ENCODE measurements at regions of chr22 and their contacts with region 1.

Region 1: DNA sequence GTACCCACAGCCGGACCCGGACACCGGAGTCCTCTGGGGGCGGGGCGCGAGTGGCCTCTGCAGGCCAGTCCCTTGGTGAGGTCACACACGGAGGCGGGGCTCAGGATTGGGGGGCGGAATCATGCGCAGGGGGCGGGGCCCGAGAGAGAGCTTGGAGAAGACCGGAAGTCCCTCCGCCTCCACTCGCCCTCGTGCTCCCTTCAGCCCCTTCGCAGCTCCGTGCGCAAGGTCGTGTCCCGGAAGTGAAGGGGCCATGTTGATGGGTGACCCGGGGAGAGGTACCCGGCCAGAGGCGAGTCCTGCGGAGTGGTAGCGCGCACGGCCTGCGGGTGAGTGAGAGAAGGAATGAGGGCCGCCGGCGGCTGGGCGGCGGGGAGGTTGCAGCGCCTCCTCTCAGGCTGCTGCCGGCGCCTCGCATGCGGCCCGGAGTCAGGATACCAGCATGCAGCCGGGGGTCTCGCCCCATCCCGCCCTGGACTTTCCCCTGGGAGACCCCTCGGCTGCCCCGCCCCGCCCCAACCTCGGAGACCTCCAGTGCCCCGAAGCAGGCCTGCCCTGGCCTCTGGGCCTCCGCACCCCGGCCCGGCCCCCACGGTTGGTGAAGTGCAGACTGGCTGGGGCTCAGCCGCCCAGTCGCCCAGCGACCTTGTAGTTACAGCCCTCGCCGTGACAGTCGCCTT is at the start of gene MIEF1:
- DNase-seq: peak; percentile 96
- H3K4me3 Mint-ChIP-seq: peak within 1 kb of the TSS; percentile 96
- H3K27ac Mint-ChIP-seq: peak within 1 kb of the TSS; percentile 91
- H3K4me1 Mint-ChIP-seq: peaks cover 34% of the 10 kb centered on the region
- H3K27me3 Mint-ChIP-seq: no peaks in the 10 kb centered on the region
- total RNA-seq, gene MIEF1: 33.3 to 35.1 TPM

Region 2: GRCh38 chr22:38700270-38700788 is 801.9 kb before region 1 on chr22:
- CTCF ChIA-PET with region 1: no interaction called
- intact Hi-C with region 1: loop called (anchors 10 kb)
- DNase-seq: peak; percentile 37
- H3K4me3 Mint-ChIP-seq: peak overlapping the region; percentile 91
- H3K27ac Mint-ChIP-seq: peak overlapping the region; percentile 93
- H3K4me1 Mint-ChIP-seq: peaks cover 59% of the 10 kb centered on the region
- H3K27me3 Mint-ChIP-seq: no peaks in the 10 kb centered on the region

Region 3: DNA sequence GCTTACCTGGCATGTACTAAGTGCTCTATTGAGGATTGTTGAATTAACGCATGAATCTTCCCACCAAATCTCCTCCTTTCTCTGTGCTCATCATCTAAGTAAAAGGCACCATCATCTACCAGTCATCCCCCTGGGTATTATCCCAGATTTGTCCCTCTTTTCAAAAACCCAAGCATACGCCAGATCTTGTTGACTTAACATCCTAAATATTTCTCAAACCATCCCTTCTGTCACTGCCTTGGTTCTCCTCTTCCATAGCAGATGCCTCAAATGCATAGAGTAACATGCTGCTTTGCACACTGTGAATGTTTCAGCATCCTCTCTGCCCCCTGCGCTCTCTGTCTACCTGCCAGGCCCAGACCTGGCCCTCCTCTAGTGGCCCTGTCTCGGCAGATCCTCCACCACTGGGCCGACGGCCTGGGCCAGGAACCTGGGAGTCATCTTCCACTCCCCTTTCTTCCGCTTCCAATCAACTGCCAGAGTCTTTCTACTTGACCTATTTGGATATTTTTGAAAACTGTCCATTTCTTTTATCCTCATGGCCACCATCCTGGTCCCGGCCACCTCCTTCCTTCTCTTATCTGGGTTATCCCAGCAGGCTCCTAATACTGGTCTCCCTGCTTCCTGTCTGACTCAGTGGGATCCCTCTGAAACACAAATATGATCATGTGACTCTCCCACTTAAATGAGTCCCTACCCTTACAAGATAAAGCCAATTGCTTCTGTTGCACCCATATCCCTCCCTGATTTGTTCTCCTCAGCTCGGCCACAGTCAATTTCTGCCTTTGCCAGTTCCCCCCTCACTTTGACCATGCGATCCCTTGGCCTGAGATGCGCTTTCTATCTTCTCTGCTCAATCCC is 106.1 kb before region 1 on chr22:
- CTCF ChIA-PET with region 1: interaction called, 4 read pairs
- intact Hi-C with region 1: loop called (anchors 2 kb)
- DNase-seq: no peak
- H3K4me3 Mint-ChIP-seq: no peak overlapping the region
- H3K27ac Mint-ChIP-seq: no peak overlapping the region
- H3K4me1 Mint-ChIP-seq: peaks cover 7% of the 10 kb centered on the region
- H3K27me3 Mint-ChIP-seq: no peaks in the 10 kb centered on the region

Region 4: GRCh38 chr22:39589875-39590274 is 87.6 kb after region 1 on chr22:
- CTCF ChIA-PET with region 1: no interaction called
- intact Hi-C with region 1: no loop called
- DNase-seq: no peak
- H3K4me3 Mint-ChIP-seq: no peak overlapping the region
- H3K27ac Mint-ChIP-seq: no peak overlapping the region
- H3K4me1 Mint-ChIP-seq: no peaks in the 10 kb centered on the region
- H3K27me3 Mint-ChIP-seq: no peaks in the 10 kb centered on the region